ENCODE measurements at regions of chr2 and their contacts with region 1.

Region 1: DNA sequence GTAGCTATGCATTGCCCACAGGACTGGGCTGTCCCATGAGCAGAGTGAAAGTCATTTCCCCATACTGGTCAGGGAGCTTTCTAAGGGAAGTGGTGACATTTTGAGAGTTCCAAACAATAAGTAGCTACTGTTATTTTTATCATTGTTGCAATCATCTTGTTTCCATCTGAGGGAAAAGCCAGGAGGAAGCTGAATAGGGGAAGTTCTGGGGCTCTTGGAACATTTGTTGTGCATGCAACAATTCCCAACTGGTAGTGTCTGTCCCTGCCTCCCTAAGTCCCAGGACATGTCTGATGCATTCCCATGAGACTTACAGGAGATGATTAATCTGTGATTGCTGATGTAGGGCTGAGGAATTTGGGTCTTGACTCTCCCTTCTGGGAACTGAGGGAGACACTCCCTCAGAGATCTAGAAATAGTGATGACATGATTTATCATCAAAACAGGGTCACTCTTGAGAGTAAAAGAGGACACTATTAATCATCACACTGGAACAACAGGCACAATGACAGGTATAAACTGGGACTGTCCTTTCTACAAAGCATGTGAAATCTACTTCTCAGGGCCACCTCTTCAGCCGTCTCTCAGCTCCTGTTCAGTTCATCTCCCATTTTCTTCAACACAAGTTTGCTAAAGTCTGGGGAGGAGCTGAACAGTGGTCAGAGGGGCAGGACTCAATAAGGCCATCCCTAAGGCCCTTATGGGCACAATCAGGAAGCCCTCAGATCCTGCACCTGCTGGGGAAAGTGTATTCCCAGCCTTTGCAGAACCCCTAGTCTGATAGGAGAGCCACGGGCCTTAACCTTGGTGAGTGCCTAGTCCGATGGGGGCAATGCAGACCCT is 28.0 kb upstream of the MARCO start:
- DNase-seq: peak; percentile 83
- H3K4me3 ChIP-seq: no peak overlapping the region
- H3K27ac ChIP-seq: peak overlapping the region; percentile 56
- H3K4me1 ChIP-seq: peaks cover 14% of the 10 kb centered on the region
- H3K27me3 ChIP-seq: no peaks in the 10 kb centered on the region
- CTCF ChIP-seq: no peak

Region 2: DNA sequence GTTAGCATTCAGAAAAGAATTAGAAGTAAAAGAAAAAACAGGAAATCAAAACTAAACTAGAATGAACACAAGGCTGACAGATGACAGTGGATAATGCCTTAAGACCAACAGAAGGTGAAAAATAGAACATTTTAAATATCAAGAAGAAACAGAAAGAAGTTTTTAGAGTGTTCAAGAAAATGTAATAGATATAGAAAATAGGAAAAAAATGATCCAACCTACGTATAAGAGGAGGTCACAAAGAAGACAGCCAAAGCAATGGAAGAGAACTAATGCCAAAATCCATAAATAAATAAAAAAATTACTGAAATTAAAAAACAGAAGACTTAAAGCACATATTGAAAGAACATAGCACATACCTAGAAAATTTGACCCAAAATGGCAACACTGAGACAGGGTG is 24.0 kb before region 1 on chr2:
- CTCF ChIA-PET with region 1: interaction called, 11 read pairs
- dilution Hi-C with region 1: no loop called
- in situ Hi-C with region 1: no loop called
- intact Hi-C with region 1: no loop called
- DNase-seq: no peak
- H3K4me3 ChIP-seq: no peak overlapping the region
- H3K27ac ChIP-seq: no peak overlapping the region
- H3K4me1 ChIP-seq: no peaks in the 10 kb centered on the region
- H3K27me3 ChIP-seq: no peaks in the 10 kb centered on the region
- CTCF ChIP-seq: no peak

Region 3: GRCh38 chr2:119333360-119333759 is 419.3 kb after region 1 on chr2:
- CTCF ChIA-PET with region 1: no interaction called
- dilution Hi-C with region 1: no loop called
- in situ Hi-C with region 1: no loop called
- intact Hi-C with region 1: no loop called
- DNase-seq: peak; percentile 9
- H3K4me3 ChIP-seq: no peak overlapping the region
- H3K27ac ChIP-seq: no peak overlapping the region
- H3K4me1 ChIP-seq: no peaks in the 10 kb centered on the region
- H3K27me3 ChIP-seq: no peaks in the 10 kb centered on the region
- CTCF ChIP-seq: no peak